BJ (cell line): ENCODE measurements at regions of chr2 and their contacts with region 1.

Region 1: DNA sequence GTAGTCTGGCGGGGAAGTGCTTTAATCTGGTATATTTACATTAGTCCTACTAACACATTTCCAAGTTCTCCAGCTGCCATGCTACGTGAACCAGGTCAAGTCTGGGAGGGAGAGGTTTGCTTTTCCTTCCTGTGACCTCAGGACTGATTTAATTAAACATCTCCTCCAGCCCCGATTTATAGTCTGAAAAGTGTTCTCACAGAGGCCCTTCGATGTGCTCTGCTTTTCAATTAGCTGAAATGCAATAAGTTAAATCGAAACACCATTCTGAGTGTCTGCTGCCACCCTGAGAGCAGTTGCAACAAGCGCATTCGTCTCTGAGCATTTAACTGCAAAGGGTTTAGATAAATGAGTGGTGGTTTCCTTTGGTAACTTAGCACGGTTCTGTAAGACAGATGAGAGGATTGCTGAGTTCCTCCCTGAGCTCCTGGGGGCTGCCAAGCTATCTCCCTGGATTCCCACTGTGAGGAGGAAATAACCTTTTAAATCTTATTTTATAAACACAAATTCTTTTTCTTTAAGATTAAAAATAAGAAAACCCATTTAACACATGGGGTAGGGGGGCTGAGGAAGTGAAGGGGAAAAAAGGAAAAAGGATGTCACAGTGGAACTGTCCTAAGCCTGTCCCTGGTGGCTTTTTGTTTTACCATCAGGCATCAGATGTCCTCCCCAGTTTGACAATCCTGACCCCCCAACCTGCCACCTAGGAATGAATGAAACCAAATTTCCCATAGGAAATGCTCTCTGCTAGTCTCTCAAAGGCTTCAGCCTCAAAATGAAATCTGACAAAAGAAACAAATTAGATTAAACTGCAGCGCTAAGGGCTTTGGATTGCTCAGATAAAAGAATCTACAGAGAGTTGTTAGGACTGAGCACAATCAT is 56.5 kb upstream of the CREB1 start:
- DNase-seq: peak; percentile 42
- H3K4me3 ChIP-seq: no peak overlapping the region
- H3K27me3 ChIP-seq: no peaks in the 10 kb centered on the region
- CTCF ChIP-seq: peak; percentile 82

Region 2: GRCh38 chr2:206800506-206801417 is 672.5 kb before region 1 on chr2:
- CTCF ChIA-PET with region 1: interaction called, 41 read pairs
- POLR2A ChIA-PET with region 1: no interaction called
- DNase-seq: peak; percentile 20
- H3K4me3 ChIP-seq: no peak overlapping the region
- H3K27me3 ChIP-seq: no peaks in the 10 kb centered on the region
- CTCF ChIP-seq: peak; percentile 68

Region 3: DNA sequence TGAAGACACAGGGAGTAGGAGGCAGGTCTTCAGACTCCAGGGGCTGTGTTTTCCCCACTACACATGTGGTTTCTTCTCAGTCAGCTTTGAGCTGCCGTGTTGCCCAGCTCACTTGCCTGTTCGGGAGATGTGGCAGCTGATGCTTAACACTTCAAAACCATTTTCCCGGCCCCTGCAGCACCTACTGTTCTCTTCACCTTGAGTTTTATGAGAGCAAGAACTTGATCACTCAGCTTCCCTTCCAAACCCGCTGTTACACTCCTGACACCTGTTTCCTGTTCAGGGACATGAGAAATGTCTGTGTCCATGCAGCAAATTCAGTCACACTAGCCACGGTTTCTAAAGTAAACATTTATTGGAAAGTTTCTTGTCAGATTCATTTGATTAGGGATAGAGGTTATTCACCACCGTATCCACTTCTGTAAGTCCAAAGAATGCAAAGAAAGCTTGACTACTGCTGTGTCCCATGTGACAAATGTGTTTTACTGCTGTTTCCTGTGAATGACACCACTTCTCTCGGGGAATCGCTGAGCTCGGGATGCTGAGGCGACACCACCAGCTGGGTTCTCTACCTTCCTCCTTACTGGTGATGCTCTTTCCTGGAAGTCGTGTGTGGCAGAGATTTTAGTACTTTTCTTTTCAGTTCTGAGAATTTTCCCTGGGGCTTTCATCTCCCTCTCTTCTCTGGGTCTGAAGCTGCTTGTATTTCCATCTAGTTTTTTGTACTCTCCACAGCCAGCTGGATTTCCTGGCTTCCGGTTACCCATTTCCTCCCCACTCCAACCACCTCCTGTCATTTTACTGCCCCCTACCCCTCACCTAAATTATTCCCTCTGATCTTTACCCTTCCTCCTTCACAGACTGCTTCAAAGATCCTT is 399.2 kb before region 1 on chr2:
- CTCF ChIA-PET with region 1: interaction called, 11 read pairs
- POLR2A ChIA-PET with region 1: no interaction called
- DNase-seq: no peak
- H3K4me3 ChIP-seq: no peak overlapping the region
- H3K27me3 ChIP-seq: no peaks in the 10 kb centered on the region
- CTCF ChIP-seq: no peak

Region 4: DNA sequence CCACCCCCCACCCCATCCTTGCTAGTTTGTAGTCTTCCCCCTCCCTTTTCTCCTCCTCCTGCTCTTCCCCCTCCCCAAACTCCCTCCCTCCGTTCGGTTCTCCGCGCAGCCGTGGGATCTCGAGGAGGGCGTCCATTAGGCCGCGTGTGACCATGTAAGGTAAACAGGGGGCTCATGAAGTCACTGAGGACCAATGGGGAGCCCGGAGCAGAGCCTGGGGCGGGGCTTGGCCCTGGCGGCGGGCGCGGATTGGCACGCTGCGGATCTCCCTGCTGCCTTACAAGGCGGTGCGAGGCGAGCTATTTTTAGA is 307.3 kb before region 1 on chr2:
- CTCF ChIA-PET with region 1: interaction called, 16 read pairs
- POLR2A ChIA-PET with region 1: interaction called, 6 read pairs
- DNase-seq: peak; percentile 100
- H3K4me3 ChIP-seq: peak overlapping the region; percentile 80
- H3K27me3 ChIP-seq: no peaks in the 10 kb centered on the region
- CTCF ChIP-seq: no peak

Region 5: GRCh38 chr2:207529330-207530159 is 56.3 kb after region 1 on chr2 and contains the start of gene CREB1:
- CTCF ChIA-PET with region 1: interaction called, 3 read pairs
- POLR2A ChIA-PET with region 1: interaction called, 12 read pairs
- DNase-seq: peak; percentile 91
- H3K4me3 ChIP-seq: peak within 1 kb of the TSS; percentile 91
- H3K27me3 ChIP-seq: no peaks in the 10 kb centered on the region
- CTCF ChIP-seq: no peak; the same call in 1 of the 2 replicates
- polyA plus RNA-seq, gene CREB1: 37.4 and 44.4 TPM in 2 replicates